ENCODE measurements at regions of chr20 and their contacts with region 1.

Region 1: DNA sequence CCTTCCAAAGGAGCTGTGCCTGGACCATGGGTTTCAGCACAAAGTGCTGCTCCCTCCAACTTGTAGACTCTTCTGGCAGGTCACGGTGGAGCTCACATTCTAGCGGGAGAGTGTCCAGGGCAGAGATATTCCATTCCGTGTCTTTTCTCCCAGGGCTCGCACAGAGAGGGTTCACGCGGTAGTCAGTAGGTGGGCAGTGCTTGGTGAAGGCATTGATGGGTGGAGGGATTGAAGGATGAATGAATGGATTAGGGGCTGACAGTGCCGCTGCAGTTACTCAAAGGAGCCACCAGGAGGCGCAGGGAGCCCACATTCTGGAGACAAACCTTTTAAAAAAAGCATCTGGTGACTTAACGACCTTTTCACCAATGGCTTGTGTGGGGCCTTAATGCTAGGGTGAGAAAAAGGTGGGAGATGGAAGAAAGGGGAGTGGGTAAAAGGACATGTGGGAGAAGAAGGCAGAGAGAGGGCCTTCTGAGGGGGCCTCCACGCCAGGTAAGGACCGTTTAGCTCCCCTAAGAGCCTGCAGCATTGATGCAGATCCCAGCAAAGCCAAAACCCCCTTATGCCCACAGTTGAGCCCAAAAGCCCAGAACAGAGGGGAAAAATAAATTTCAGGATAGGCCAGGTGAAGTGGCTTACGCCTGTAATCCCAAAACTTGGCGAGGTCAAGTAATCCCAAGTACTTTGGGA is 17.5 kb upstream of the FAM110A start:
- DNase-seq: peak; percentile 40 to 75
- H3K4me3 ChIP-seq: no peak overlapping the region
- H3K27ac ChIP-seq: no peak overlapping the region
- H3K4me1 ChIP-seq: peaks cover 0 to 3% (median 0%) of the 10 kb centered on the region in 4 donors
- H3K27me3 ChIP-seq: peaks cover 0 to 33% of the 10 kb centered on the region in 2 donors
- CTCF ChIP-seq: peak; percentile 95 to 98

Region 2: DNA sequence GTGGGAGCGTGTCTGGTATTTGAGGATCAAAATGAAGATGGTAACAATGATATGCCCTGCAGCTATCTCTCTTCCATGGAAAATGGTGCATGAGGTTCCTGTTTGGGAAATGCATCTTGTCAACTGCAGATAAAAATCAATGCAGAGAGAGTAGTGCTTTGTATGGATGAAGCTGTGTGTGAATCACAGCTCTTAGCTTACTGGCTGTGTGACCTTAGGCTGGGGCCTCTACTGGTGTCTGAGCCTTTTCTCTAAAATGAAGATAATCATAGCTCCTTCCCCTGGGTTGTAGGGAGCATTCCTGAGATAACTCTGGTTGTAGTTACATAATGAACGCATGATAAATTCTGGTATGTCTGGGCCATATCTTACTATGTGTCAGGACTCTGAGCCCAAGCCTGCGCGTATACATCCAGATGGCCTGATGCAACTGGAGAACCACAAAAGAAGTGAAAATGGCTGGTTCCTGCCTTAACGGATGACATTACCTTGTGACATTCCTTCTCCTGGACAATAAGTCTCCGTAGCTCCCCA is 80.5 kb after region 1 on chr20:
- intact Hi-C with region 1: no loop called
- DNase-seq: no peak
- H3K4me3 ChIP-seq: no peak overlapping the region
- H3K27ac ChIP-seq: no peak overlapping the region
- H3K4me1 ChIP-seq: peaks cover 0 to 5% (median 2%) of the 10 kb centered on the region in 4 donors
- H3K27me3 ChIP-seq: no peaks in the 10 kb centered on the region
- CTCF ChIP-seq: no peak

Region 3: DNA sequence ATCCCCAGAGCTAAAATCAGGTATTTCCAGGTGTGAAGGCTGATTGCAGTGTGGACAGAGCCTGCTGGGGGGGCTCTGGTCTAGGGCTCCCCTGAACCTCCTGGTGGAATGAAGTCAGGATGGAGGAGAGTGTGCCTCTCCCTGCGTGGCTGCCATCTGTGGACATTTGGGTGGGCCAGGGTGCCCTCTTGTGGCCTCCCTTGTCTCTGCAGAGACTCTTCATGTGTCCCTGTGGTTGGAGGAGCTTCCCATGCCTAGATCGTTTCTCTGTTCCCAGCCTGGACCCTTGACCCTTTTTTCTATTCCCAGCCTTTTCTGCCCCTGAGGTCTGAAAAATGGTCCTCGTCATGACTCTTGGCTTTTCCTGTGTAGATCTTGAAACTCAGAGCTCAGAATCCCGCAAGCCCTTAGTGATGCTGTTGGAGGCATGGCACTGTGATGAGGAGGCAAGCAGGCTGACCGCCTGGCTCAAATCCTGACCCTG is 292.4 kb after region 1 on chr20:
- intact Hi-C with region 1: loop called (anchors 5 kb)
- DNase-seq: peak in 1 of 2 donors; percentile 54
- H3K4me3 ChIP-seq: no peak overlapping the region
- H3K27ac ChIP-seq: no peak overlapping the region
- H3K4me1 ChIP-seq: no peaks in the 10 kb centered on the region
- H3K27me3 ChIP-seq: no peaks in the 10 kb centered on the region
- CTCF ChIP-seq: peak; percentile 36 to 61

Measured in tibial artery (tissue), 4 donors.